Gastrocnemius medialis (tissue), 4 donors: ENCODE measurements at regions of chr16 and their contacts with region 1.

Region 1: GRCh38 chr16:14300705-14301168 is 229.6 kb downstream of the MRTFB start:
- DNase-seq: peak; percentile 74 to 86
- ATAC-seq: peak; percentile 69 to 72
- H3K4me3 ChIP-seq: peak overlapping the region; percentile 61 to 98 (median 82)
- H3K27ac ChIP-seq: peak overlapping the region; percentile 88 to 99 (median 96)
- H3K4me1 ChIP-seq: peaks cover 9 to 17% of the 10 kb centered on the region in 2 donors
- H3K27me3 ChIP-seq: no peaks in the 10 kb centered on the region
- CTCF ChIP-seq: peak; percentile 35 to 69 (median 60)
- POLR2A ChIP-seq: peak; percentile 33 to 39

Region 2: GRCh38 chr16:14399378-14400284 is 98.9 kb after region 1 on chr16:
- in situ Hi-C with region 1: loop called in 1 of 4 experiments (anchors 25 kb)
- intact Hi-C with region 1: loop called (anchors 2 kb)
- DNase-seq: peak; percentile 83 to 89
- ATAC-seq: peak; percentile 87 to 88
- H3K4me3 ChIP-seq: peak overlapping the region; percentile 17 to 32 (median 22)
- H3K27ac ChIP-seq: peak overlapping the region; percentile 91 to 96 (median 94)
- H3K4me1 ChIP-seq: peaks cover 21 to 25% of the 10 kb centered on the region in 2 donors
- H3K27me3 ChIP-seq: no peaks in the 10 kb centered on the region
- CTCF ChIP-seq: no peak
- POLR2A ChIP-seq: no peak

Region 3: DNA sequence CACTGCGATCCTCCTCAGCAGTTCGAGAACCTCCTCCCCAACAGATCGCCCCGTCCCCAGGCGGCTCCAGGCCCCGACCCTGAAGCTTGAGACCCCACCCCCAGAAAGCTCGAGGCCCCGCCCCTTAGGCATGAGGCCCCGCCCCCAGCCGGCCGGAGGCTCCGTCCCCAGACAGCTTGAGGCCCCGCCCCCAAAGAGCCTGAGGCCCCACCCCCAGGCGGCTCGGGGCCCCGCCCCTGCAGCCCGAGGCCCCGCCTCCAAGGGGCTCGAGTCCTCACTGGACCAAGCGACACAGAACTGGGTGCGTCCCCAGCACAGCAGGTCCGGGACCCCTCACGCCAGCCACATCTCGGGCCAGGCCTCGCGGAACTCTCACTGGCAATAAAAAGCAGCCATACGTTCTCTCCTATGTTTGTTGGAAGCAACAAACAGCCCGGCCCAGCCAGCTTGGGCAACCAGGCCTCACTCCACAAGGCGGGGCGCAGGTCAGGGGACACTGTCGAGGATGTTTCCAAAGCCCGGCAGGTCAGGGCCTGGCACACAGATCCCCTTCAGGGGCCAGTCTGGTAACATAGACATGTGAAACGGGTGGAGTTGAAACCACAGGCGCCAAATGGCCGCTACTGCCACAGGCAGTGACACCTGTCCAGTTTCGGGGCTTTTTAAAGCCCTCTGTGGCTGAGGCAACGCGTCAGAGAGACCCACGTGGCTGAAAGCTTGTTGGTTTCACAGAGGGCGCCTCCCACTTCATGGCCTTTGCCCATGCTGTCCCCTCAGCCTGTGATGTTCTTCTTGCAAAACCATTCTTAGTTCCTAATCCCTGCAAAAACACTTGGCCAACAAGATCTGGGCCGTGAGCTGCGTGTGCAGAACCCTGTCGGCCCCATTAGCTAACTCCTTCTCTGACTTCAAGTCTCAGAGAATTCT is 105.1 kb after region 1 on chr16:
- in situ Hi-C with region 1: loop called in 1 of 4 experiments (anchors 25 kb)
- intact Hi-C with region 1: loop called (anchors 2 kb)
- DNase-seq: peak; percentile 45 to 85
- ATAC-seq: peak; percentile 79
- H3K4me3 ChIP-seq: peak overlapping the region; percentile 15 to 30 (median 23)
- H3K27ac ChIP-seq: peak overlapping the region; percentile 86 to 89 (median 88)
- H3K4me1 ChIP-seq: peaks cover 6 to 11% of the 10 kb centered on the region in 2 donors
- H3K27me3 ChIP-seq: no peaks in the 10 kb centered on the region
- CTCF ChIP-seq: no peak
- POLR2A ChIP-seq: peak; percentile 65 to 75

Region 4: DNA sequence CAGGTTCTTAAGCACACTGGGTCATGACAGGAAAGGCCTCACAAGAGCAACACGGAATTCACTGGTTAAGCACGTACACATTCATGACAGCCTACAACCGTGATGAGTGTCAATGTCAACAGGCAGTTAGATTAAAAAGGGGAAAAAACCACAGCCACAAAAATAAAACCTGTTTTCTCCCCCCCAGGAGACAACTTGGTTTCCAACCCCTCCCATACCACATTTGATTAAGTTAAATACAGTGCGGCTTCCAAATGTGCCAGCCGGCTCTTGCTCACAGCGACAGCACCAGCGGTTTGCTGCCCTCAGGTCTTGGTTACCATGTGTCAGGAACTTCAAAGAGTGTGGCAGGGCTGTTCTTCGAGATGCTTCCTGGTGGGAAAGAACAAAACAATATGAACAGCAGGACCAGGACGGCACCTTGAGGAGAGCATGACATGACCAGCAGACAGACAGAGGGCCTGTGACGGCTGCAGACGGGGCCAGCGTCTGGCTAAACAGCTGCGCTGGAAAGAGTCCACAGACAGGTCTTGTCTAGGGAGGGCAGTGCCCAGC is 135.7 kb after region 1 on chr16:
- in situ Hi-C with region 1: loop called in 1 of 4 experiments (anchors 10 kb)
- intact Hi-C with region 1: loop called (anchors 5 kb)
- DNase-seq: peak; percentile 78 to 92
- ATAC-seq: peak; percentile 92 to 97
- H3K4me3 ChIP-seq: peak overlapping the region; percentile 22 to 40 (median 32)
- H3K27ac ChIP-seq: peak overlapping the region; percentile 77 to 85 (median 82)
- H3K4me1 ChIP-seq: peaks cover 8 to 17% of the 10 kb centered on the region in 2 donors
- H3K27me3 ChIP-seq: no peaks in the 10 kb centered on the region
- CTCF ChIP-seq: no peak
- POLR2A ChIP-seq: peak in 1 of 2 donors; percentile 17

Region 5: DNA sequence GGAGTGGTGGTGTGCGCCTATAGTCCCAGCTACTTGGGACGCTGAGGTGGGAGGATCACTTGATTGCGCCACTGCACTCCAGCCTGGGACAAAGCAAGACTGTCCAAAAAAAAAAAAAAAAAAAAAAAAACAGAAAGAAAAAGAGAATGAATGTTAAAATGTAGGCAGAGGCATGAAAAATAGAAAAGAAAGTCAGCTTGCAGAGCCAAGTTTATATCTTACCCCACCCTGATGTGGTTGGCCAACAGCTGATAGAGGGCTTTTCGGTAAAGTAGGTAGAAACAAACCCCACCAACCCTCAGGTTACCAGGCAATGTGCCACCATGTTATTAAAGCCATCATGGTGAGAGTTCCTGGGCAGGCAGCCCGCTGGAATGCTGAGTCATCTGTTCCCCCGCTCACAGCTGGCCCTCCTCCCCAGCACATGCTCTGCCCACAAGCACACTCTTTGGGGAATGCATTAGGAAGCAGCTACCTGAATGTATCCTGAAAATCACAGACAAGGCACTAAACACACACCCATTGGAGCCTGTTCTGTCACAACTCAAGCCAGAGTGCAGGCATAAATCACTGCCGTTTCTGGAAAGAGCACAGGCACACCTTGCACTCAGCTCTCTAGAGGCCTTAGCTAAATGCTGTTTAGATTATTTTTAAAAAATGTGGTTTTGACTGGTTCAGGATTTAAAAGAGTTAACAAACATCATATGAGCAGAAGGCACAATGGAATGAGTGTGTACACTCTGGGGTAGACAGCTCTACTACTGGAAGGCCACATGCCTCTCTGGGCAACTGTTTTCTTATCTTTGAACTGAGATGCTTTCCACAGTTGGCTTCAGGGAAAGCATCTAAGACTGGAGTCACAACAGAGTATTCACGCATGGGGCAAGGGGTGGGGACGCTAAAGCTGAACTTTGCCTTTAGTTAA is 200.9 kb after region 1 on chr16:
- in situ Hi-C with region 1: no loop called
- intact Hi-C with region 1: loop called (anchors 2 kb)
- DNase-seq: peak; percentile 91 to 96
- ATAC-seq: peak; percentile 86 to 91
- H3K4me3 ChIP-seq: peak overlapping the region in 1 of 4 donors; percentile 28
- H3K27ac ChIP-seq: peak overlapping the region; percentile 85 to 88 (median 86)
- H3K4me1 ChIP-seq: peaks cover 77 to 83% of the 10 kb centered on the region in 2 donors
- H3K27me3 ChIP-seq: no peaks in the 10 kb centered on the region
- CTCF ChIP-seq: no peak
- POLR2A ChIP-seq: peak in 1 of 2 donors; percentile 27

Region 6: GRCh38 chr16:14632692-14633569 is 332.2 kb after region 1 on chr16 and contains the start of gene BFAR:
- in situ Hi-C with region 1: no loop called
- intact Hi-C with region 1: loop called (anchors 5 kb)
- DNase-seq: peak; percentile 99
- ATAC-seq: peak; percentile 84 to 85
- H3K4me3 ChIP-seq: peak within 1 kb of the TSS; percentile 90 to 97 (median 96)
- H3K27ac ChIP-seq: peak within 1 kb of the TSS; percentile 98 to 99 (median 98)
- H3K4me1 ChIP-seq: peaks cover 44 to 45% of the 10 kb centered on the region in 2 donors
- H3K27me3 ChIP-seq: no peaks in the 10 kb centered on the region
- CTCF ChIP-seq: no peak
- POLR2A ChIP-seq: peak; percentile 99
- total RNA-seq, gene BFAR: 39.7 to 103 (median 65.5) TPM